Left lung (tissue), 14 donors: ENCODE measurements at regions of chr5 and their contacts with region 1.

Region 1: DNA sequence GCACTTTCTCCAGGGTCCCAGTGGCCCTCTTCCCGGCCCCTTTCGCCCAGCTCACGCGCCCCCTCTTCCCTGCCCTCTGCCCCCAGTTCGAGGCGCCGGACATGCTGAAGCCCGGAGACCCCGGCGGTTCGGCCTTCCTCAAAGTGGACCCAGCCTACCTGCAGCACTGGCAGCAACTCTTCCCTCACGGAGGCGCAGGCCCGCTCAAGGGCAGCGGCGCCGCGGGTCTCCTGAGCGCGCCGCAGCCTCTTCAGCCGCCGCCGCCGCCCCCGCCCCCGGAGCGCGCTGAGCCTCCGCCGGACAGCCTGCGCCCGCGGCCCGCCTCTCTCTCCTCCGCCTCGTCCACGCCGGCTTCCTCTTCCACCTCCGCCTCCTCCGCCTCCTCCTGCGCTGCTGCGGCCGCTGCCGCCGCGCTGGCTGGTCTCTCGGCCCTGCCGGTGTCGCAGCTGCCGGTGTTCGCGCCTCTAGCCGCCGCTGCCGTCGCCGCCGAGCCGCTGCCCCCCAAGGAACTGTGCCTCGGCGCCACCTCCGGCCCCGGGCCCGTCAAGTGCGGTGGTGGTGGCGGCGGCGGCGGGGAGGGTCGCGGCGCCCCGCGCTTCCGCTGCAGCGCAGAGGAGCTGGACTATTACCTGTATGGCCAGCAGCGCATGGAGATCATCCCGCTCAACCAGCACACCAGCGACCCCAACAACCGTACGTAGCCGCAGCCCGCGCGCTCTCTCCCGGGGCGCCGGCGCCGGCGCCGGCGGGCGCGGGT is 1.1 kb downstream of the PRDM6 start:
- DNase-seq: peak in 1 of 4 donors; percentile 81
- ATAC-seq: peak; percentile 57
- H3K4me3 ChIP-seq: peak overlapping the region; percentile 45 to 47
- H3K27ac ChIP-seq: peak overlapping the region; percentile 66 to 70
- H3K4me1 ChIP-seq: peaks cover 0 to 31% of the 10 kb centered on the region in 2 donors
- H3K27me3 ChIP-seq: peaks cover 85 to 100% of the 10 kb centered on the region in 2 donors
- CTCF ChIP-seq: no peak

Region 2: GRCh38 chr5:123157791-123158581 is 67.9 kb after region 1 on chr5:
- intact Hi-C with region 1: loop called in 1 of 2 experiments (anchors 10 kb)
- DNase-seq: peak in 2 of 4 donors; percentile 81 to 84
- ATAC-seq: peak; percentile 53
- H3K4me3 ChIP-seq: no peak overlapping the region
- H3K27ac ChIP-seq: no peak overlapping the region
- H3K4me1 ChIP-seq: no peaks in the 10 kb centered on the region
- H3K27me3 ChIP-seq: no peaks in the 10 kb centered on the region
- CTCF ChIP-seq: no peak